ENCODE measurements at regions of chr18 and their contacts with region 1.

Region 1: GRCh38 chr18:53603276-53603675 is 621.2 kb downstream of the MBD2 start:
- DNase-seq: no peak
- ATAC-seq: no peak
- H3K4me3 ChIP-seq: no peak overlapping the region
- H3K27ac ChIP-seq: no peak overlapping the region
- H3K4me1 ChIP-seq: no peaks in the 10 kb centered on the region
- H3K27me3 ChIP-seq: no peaks in the 10 kb centered on the region
- CTCF ChIP-seq: no peak

Region 2: GRCh38 chr18:53665701-53666100 is 62.4 kb after region 1 on chr18:
- intact Hi-C with region 1: loop called in 1 of 10 experiments (anchors 10 kb)
- DNase-seq: no peak
- ATAC-seq: no peak
- H3K4me3 ChIP-seq: no peak overlapping the region
- H3K27ac ChIP-seq: no peak overlapping the region
- H3K4me1 ChIP-seq: no peaks in the 10 kb centered on the region
- H3K27me3 ChIP-seq: no peaks in the 10 kb centered on the region
- CTCF ChIP-seq: no peak

Measured in heart right ventricle (tissue), 16 donors.